T-cell (primary cell): ENCODE measurements at regions of chr13 and their contacts with region 1.

Region 1: DNA sequence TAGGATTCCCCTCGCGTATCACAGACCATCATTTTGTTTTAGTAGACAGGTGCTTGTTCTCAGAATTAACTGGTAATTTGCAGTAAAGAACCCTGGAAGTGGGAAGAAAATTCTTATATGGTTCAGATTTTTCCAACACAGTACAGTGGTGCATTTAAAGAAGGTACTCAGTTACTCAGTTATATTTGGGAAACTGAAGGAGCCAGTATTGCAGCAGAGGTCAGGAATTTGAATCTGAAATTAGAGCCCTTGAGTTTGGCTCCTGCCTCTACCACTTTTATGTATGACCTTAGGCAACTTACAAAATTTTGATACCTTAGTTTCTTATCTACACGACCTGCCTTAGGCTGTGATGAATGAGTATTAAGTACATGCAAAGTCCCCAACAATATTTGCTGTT is 19.7 kb downstream of the METTL21C start:
- DNase-seq: no peak
- ATAC-seq: no peak
- H3K4me3 ChIP-seq: no peak overlapping the region
- H3K4me3 Mint-ChIP-seq: no peak overlapping the region
- H3K27ac ChIP-seq: no peak overlapping the region
- H3K27ac Mint-ChIP-seq: peak overlapping the region in 1 of 2 donors; percentile 29
- H3K4me1 ChIP-seq: no peaks in the 10 kb centered on the region
- H3K4me1 Mint-ChIP-seq: peaks cover 0 to 6% (median 0%) of the 10 kb centered on the region in 3 donors
- H3K27me3 ChIP-seq: no peaks in the 10 kb centered on the region
- H3K27me3 Mint-ChIP-seq: no peaks in the 10 kb centered on the region

Region 2: DNA sequence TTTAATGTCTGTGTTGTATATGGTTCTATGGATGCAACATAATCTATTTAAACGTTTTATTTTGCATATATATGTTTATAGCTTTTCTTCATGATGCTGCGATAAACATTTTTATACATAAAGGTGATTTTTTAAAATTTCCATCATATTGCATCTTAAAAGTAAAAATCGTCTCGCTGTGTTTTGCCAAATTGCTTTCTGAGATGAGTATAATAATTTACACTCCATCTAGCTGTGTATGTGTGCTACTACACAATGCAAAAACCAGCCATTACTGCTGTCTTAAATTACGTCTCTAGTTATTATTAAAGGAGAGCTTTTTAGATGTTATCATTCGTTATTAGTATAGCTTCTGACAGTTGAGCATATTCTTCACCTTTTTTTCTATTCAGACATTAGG is 17.5 kb before region 1 on chr13:
- CTCF ChIA-PET with region 1: no interaction called
- POLR2A ChIA-PET with region 1: interaction called, 4 to 10 read pairs
- DNase-seq: peak in 1 of 35 experiments; percentile 19
- ATAC-seq: no peak
- H3K4me3 ChIP-seq: no peak overlapping the region
- H3K4me3 Mint-ChIP-seq: no peak overlapping the region
- H3K27ac ChIP-seq: no peak overlapping the region
- H3K27ac Mint-ChIP-seq: no peak overlapping the region
- H3K4me1 ChIP-seq: no peaks in the 10 kb centered on the region
- H3K4me1 Mint-ChIP-seq: no peaks in the 10 kb centered on the region
- H3K27me3 ChIP-seq: no peaks in the 10 kb centered on the region
- H3K27me3 Mint-ChIP-seq: no peaks in the 10 kb centered on the region

Region 3: GRCh38 chr13:102700083-102701001 is 25.2 kb after region 1 on chr13:
- CTCF ChIA-PET with region 1: no interaction called
- POLR2A ChIA-PET with region 1: no interaction called
- DNase-seq: no peak
- ATAC-seq: no peak
- H3K4me3 ChIP-seq: no peak overlapping the region
- H3K4me3 Mint-ChIP-seq: no peak overlapping the region
- H3K27ac ChIP-seq: no peak overlapping the region
- H3K27ac Mint-ChIP-seq: no peak overlapping the region
- H3K4me1 ChIP-seq: no peaks in the 10 kb centered on the region
- H3K4me1 Mint-ChIP-seq: no peaks in the 10 kb centered on the region
- H3K27me3 ChIP-seq: peaks cover 0 to 11% of the 10 kb centered on the region in 2 experiments
- H3K27me3 Mint-ChIP-seq: peaks cover 11 to 24% of the 10 kb centered on the region in 2 donors

Region 4: DNA sequence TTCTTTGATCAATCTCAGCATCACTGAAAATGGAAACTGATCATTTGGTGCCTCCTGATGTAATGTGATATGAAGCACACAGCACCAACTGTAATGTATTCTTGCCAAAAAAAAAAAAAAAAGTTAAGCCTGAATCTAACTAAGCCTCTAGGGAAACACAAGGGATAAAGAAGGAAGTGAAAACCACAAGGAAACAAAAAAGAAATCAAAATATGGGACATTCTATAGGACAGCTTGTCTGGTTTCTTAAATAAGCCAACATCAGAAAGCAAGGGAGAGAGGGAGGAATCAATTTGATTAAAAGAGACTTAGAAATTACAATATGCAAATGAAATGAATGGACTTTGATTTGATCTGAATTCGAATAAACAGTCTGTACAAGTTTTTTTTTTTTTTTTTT is 40.3 kb after region 1 on chr13:
- CTCF ChIA-PET with region 1: no interaction called
- POLR2A ChIA-PET with region 1: no interaction called
- DNase-seq: no peak
- ATAC-seq: no peak
- H3K4me3 ChIP-seq: no peak overlapping the region
- H3K4me3 Mint-ChIP-seq: no peak overlapping the region
- H3K27ac ChIP-seq: no peak overlapping the region
- H3K27ac Mint-ChIP-seq: no peak overlapping the region
- H3K4me1 ChIP-seq: no peaks in the 10 kb centered on the region
- H3K4me1 Mint-ChIP-seq: no peaks in the 10 kb centered on the region
- H3K27me3 ChIP-seq: peaks cover 0 to 13% of the 10 kb centered on the region in 2 experiments
- H3K27me3 Mint-ChIP-seq: peaks cover 10 to 15% of the 10 kb centered on the region in 2 donors